ENCODE measurements at regions of chr19 and their contacts with region 1.

Region 1: GRCh38 chr19:43555185-43555770 is 20.0 kb downstream of the XRCC1 start:
- H3K4me3 Mint-ChIP-seq: no peak overlapping the region
- H3K27ac Mint-ChIP-seq: no peak overlapping the region
- H3K4me1 Mint-ChIP-seq: peaks cover 5% of the 10 kb centered on the region
- H3K27me3 Mint-ChIP-seq: no peaks in the 10 kb centered on the region

Region 2: DNA sequence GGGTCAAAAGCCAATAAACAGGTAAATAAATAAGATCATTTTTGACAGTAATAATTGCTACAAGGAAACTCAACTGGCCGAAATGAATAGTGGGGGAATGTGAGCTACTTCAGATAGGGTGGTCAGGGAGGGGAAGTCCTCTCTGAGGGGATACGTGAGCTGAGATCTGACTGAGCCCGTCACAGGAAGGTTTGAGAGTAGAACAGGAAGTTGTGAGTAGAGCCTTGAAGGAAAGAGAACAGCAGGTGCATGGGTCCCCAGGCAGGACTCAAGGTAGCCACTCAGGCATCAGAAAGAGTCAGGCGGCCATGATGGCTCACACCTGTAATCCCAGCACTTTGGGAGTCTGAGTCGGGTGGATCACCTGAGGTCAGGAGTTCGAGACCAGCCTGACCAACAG is 34.4 kb after region 1 on chr19:
- intact Hi-C with region 1: no loop called
- H3K4me3 Mint-ChIP-seq: no peak overlapping the region
- H3K27ac Mint-ChIP-seq: no peak overlapping the region
- H3K4me1 Mint-ChIP-seq: peaks cover 36% of the 10 kb centered on the region
- H3K27me3 Mint-ChIP-seq: no peaks in the 10 kb centered on the region

Region 3: GRCh38 chr19:43639519-43640423 is 84.5 kb after region 1 on chr19 and contains the start of gene CADM4:
- intact Hi-C with region 1: loop called (anchors 10 kb)
- H3K4me3 Mint-ChIP-seq: peak within 1 kb of the TSS; percentile 76
- H3K27ac Mint-ChIP-seq: peak within 1 kb of the TSS; percentile 51
- H3K4me1 Mint-ChIP-seq: peaks cover 25% of the 10 kb centered on the region
- H3K27me3 Mint-ChIP-seq: peaks cover 60% of the 10 kb centered on the region